ENCODE measurements at regions of chr16 and their contacts with region 1.

Region 1: DNA sequence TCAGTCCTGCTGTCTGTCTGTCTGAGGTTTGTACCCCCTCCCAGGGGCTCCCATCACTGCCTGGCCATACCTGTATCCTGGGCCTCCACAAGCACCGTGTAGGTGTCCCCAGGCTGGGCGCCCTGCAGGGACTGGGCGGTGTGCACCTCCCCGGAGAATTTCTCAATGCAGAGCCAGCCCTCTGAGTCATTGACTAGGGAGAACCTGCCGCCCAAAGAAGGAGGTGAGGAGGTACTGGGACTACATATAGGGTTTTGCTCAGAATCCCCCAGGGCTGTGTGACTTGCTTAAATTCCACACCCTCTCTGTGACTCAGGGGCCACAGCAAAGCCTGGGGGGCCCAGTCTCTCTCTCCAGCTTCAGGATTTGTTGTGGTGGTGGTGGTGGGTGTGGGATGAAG is 7.6 kb downstream of the CDH16 start:
- DNase-seq: no peak
- H3K4me3 Mint-ChIP-seq: no peak overlapping the region
- H3K27ac Mint-ChIP-seq: no peak overlapping the region
- H3K4me1 Mint-ChIP-seq: peaks cover 7% of the 10 kb centered on the region
- H3K27me3 Mint-ChIP-seq: peaks cover 43% of the 10 kb centered on the region

Region 2: DNA sequence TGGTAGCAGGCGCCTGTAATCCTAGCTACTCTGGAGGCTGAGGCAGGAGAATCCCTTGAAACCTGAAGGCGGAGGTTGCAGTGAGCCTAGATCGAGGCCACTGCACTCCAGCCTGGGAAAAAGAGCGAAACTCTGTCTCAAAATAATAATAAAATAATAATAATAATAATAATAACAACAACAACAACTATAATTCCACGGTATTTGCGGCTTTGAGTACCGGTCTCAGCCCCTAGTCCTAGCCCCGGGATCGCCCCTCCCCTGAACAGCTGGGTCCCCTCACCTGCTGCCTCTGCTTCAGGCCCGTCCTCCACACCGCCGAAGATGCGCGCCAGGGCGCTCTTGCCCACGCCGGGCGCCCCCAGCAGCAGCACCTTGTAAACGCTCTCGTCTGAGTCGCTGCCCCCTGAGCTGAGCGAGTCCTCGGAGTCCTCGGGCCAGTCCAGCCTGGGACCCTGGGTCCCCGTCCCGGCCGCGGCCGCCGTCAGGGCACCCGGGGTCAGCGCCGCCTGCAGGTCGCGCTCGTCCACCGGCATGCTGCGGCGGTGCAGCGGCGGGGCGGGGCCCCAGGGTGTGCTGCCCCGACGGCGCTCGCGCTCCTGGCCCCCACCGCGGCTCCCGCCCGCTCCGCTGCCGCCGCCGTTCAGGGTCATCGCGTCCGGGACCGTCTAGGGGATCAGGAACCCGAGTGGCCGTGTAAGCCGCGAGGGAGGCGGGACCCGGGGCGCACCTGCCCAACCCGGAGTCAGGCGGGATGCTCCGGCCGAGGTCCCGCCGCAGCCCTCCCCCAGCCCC is 13.6 kb after region 1 on chr16:
- CTCF ChIA-PET with region 1: interaction called, 17 read pairs
- DNase-seq: peak; percentile 60
- H3K4me3 Mint-ChIP-seq: peak overlapping the region; percentile 18
- H3K27ac Mint-ChIP-seq: no peak overlapping the region
- H3K4me1 Mint-ChIP-seq: peaks cover 19% of the 10 kb centered on the region
- H3K27me3 Mint-ChIP-seq: peaks cover 78% of the 10 kb centered on the region

Region 3: DNA sequence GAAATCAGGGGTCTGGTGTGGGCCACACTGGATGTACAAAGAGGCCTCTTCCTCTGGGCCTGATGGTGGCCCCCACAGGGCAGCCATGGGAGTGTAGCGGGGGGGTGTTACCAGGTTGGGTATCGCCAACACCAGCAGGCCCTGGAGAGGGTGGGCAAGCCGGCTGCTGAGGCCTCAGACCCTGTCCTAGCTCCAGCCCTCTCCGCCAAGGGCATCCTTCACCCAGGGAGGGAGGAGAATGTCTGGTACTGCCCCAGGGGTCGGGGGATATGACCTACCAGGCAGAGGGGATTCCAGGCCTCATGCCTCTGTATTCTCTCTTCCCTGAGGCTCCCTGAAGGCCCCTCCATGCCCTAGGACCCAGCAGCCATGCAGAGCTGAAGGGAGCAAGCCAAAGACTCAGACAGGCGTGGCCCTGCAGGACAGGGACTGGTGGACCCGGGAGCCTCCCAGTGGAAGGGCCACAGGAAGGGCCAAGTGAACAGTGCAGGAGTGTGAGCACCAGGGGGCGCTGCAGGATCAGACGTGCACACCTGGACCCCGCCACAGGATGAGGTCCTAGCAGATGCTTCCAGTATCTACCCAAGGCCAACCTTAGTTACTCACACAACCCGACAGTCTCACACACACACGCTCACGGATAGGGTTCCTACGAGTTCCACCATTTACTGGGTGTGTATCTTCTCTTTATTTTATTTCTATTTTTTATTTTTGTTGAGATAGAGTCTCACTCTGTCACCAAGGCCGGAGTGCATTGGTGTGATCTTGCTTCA is 66.4 kb after region 1 on chr16:
- CTCF ChIA-PET with region 1: no interaction called
- DNase-seq: peak; percentile 94
- H3K4me3 Mint-ChIP-seq: no peak overlapping the region
- H3K27ac Mint-ChIP-seq: peak overlapping the region; percentile 69
- H3K4me1 Mint-ChIP-seq: peaks cover 66% of the 10 kb centered on the region
- H3K27me3 Mint-ChIP-seq: peaks cover 5% of the 10 kb centered on the region

Measured in activated naive CD4-positive, alpha-beta T cell treated with anti-CD3 and anti-CD28 coated beads, Interleukin-2, amount 10 ng/mL, durations not matched to agents 7 days and 5 days (primary cell).